Dendritic cell treated with granulocyte-macrophage colony-stimulating factor and Interleukin-4, amounts not matched to agents 40 ng/mL and 50 ng/mL, for 4 days (primary cell): ENCODE measurements at regions of chr13 and their contacts with region 1.

Region 1: GRCh38 chr13:26186118-26186870 is 35.8 kb downstream of the RNF6 start:
- H3K4me3 Mint-ChIP-seq: peak overlapping the region; percentile 91
- H3K27ac Mint-ChIP-seq: peak overlapping the region; percentile 96
- H3K4me1 Mint-ChIP-seq: peaks cover 21% of the 10 kb centered on the region
- H3K27me3 Mint-ChIP-seq: no peaks in the 10 kb centered on the region

Region 2: DNA sequence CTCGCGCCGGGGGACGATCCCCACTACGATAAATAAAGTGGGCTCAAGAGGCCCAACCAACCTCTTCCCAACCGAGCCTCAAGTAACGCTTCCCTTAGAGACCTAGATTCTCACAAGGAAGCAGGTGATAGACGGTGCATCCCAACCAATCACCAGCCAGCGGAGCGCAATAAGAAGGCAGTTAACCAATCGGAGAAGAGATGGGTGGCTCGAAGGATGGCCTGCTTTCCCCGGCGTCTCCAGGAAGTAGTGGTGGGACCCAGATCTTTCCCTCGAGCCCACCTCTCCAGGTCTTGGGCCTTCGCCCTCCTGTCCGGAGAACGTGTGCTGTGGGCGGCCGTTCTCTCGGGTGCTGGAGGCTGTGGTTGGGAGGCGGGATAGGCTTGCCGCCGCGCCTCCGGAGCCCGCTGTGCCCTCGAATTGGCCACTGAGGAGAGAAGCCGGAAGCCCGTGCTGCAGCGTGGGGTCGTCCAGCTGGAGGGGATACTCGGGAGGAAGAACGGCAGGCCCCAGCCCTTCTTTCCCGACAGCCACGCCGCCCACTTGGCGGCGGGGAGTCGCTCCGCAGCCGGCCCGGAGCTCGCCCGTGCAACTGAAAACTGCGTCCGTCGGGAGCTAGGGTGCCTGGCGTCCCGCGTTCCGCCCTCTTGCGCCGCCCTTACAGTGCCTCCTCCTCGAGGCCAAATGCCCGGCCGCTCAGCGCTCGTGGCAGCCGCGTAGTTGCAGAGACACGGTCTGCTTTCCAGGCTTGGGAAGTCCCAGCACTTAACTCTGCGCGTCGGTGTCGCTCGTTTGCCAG is 35.6 kb after region 1 on chr13 and contains the start of gene RNF6:
- intact Hi-C with region 1: loop called (anchors 1 kb)
- H3K4me3 Mint-ChIP-seq: peak within 1 kb of the TSS; percentile 99
- H3K27ac Mint-ChIP-seq: peak within 1 kb of the TSS; percentile 99
- H3K4me1 Mint-ChIP-seq: peaks cover 25% of the 10 kb centered on the region
- H3K27me3 Mint-ChIP-seq: no peaks in the 10 kb centered on the region

Region 3: GRCh38 chr13:26253787-26254582 is 67.7 kb after region 1 on chr13 and contains the start of gene CDK8:
- intact Hi-C with region 1: loop called (anchors 2 kb)
- H3K4me3 Mint-ChIP-seq: peak within 1 kb of the TSS; percentile 86
- H3K27ac Mint-ChIP-seq: peak within 1 kb of the TSS; percentile 93
- H3K4me1 Mint-ChIP-seq: peaks cover 19% of the 10 kb centered on the region
- H3K27me3 Mint-ChIP-seq: no peaks in the 10 kb centered on the region

Region 4: GRCh38 chr13:26449058-26449848 is 263.0 kb after region 1 on chr13:
- intact Hi-C with region 1: no loop called
- H3K4me3 Mint-ChIP-seq: no peak overlapping the region
- H3K27ac Mint-ChIP-seq: no peak overlapping the region
- H3K4me1 Mint-ChIP-seq: no peaks in the 10 kb centered on the region
- H3K27me3 Mint-ChIP-seq: peaks cover 3% of the 10 kb centered on the region

Region 5: DNA sequence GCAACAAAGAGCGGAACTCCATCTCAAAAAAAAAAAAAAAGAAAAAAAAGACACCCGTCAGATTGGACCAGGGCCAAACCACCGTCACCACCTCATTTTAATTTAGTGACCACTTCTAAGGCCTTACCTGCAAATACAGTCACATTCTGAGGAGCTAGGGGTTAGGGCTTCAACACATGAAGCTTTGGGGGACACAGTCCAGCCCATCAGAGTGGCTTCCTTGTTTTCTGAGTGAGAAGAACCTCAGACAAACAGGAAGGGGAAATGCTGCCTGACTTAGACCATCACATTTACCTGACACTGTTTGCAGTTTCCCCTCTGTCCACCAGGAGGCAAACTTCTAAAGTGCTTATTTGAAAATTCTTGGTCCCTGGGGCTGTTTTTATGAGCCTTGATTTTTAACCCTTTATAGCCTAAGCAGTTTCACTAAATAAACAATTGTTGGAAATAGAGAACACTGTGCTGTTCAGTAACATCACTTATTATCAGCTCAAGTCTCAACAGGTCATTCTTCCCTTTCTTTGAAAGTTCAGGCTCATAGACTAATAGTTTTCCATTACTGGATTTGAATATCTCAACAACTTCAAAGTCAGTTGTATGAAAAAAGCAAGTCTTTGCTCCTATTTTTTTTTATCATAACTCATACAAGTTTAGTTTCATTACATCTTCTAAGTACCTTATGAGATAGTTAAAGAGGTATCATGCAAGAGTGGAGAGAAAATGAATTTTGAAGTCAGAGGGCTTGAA is 296.3 kb after region 1 on chr13:
- intact Hi-C with region 1: loop called (anchors 5 kb)
- H3K4me3 Mint-ChIP-seq: no peak overlapping the region
- H3K27ac Mint-ChIP-seq: no peak overlapping the region
- H3K4me1 Mint-ChIP-seq: no peaks in the 10 kb centered on the region
- H3K27me3 Mint-ChIP-seq: no peaks in the 10 kb centered on the region

Region 6: GRCh38 chr13:26495750-26496149 is 309.5 kb after region 1 on chr13:
- intact Hi-C with region 1: loop called (anchors 1 kb)
- H3K4me3 Mint-ChIP-seq: no peak overlapping the region
- H3K27ac Mint-ChIP-seq: no peak overlapping the region
- H3K4me1 Mint-ChIP-seq: no peaks in the 10 kb centered on the region
- H3K27me3 Mint-ChIP-seq: peaks cover 6% of the 10 kb centered on the region

Region 7: DNA sequence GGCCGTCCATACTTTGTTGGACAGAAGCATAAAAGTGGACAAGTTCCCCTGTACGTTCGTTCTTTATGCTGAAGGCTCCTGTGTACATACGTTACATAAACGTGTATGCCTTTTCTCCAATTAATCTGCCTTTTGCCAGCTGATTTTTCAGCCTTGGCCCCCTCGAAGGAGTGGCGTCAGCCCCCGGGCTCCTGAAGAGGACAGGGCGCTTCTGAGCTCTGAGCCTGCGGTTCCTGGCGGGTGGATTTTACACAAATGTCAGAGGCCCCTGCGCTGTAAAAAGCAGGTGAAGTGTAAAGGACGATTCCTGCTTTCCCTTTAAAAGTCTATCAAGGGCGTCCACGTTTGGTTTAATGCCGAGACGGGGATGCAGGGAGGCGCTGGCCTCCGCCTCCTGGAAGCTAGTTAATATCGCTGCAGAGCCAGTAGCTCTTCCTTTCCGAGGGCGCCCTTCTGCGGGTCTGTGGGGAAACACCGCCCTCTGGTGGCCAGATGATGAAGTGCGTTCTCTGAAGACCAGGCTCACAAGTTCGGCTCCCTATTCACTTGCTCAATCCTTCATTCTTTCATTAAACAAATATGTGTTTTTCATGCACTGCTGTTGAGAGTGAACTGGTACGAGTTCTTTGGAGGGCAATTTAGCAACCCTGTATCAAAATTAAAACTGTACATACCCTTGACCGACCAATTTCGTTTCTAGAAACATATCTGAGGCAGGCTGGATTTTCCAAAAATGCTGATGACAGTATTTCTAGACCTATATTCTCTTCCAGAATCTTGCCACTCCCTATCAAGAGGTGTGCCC is 512.3 kb after region 1 on chr13:
- intact Hi-C with region 1: loop called (anchors 1 kb)
- H3K4me3 Mint-ChIP-seq: no peak overlapping the region
- H3K27ac Mint-ChIP-seq: no peak overlapping the region
- H3K4me1 Mint-ChIP-seq: no peaks in the 10 kb centered on the region
- H3K27me3 Mint-ChIP-seq: peaks cover 10% of the 10 kb centered on the region

Region 8: GRCh38 chr13:27171827-27172494 is 985.7 kb after region 1 on chr13:
- intact Hi-C with region 1: loop called (anchors 10 kb)
- H3K4me3 Mint-ChIP-seq: peak overlapping the region; percentile 77
- H3K27ac Mint-ChIP-seq: peak overlapping the region; percentile 89
- H3K4me1 Mint-ChIP-seq: peaks cover 56% of the 10 kb centered on the region
- H3K27me3 Mint-ChIP-seq: no peaks in the 10 kb centered on the region